PC-3 (cell line): ENCODE measurements at regions of chr11 and their contacts with region 1.

Region 1: GRCh38 chr11:129853518-129854236 is 38.0 kb downstream of the TMEM45B start:
- DNase-seq: peak; percentile 99
- ATAC-seq: peak; percentile 78
- H3K4me3 ChIP-seq: peak overlapping the region; percentile 3; the same call in 1 of the 2 replicates
- H3K27ac ChIP-seq: peak overlapping the region; percentile 95
- H3K4me1 ChIP-seq: peaks cover 49% of the 10 kb centered on the region
- H3K27me3 ChIP-seq: no peaks in the 10 kb centered on the region
- CTCF ChIP-seq: no peak

Region 2: DNA sequence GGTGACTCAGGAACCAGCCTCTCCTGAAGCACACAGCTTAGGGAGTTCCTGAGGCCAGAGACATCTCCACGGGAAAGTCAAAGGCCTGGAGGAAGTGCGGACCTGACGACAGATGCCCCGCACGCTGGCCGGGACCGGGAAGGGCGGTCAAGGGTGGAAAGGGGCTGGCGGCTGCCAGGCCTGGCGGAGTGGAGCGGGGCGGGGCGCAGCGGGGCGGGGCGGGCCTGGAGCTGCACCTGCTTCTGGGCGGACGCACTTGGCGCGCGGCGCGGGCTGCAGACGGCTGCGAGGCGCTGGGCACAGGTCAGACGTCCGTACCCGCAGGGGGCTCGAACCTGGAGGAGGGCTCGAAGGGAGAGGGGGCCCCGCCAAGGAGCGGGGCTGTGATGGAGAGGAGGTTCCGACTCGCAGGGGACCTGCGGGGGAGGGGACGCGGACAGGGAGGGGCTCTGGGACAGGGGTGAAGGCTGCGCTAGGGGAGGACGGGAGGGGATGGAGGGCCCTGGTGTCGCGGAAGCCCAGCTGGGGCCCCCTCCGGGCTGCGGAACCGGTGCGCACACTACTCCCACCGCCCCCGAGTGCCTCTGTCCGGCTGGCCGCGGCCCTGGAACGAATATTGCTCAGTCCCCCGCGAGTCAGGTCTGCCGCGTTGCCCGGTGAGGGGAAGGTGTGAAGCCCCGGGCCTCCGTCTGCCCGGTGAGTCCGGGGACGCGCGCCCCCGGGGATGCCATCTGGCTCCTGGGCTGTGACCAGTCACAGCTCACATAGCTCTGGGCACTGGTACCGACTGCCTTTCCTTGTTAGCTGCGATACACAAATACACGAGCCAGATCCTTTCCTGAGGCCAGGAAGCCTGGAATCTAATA is 37.8 kb before region 1 on chr11 and contains the start of gene TMEM45B:
- CTCF ChIA-PET with region 1: no interaction called
- POLR2A ChIA-PET with region 1: no interaction called
- intact Hi-C with region 1: loop called (anchors 5 kb)
- DNase-seq: peak; percentile 66
- ATAC-seq: peak; percentile 80
- H3K4me3 ChIP-seq: peak within 1 kb of the TSS; percentile 89
- H3K27ac ChIP-seq: peak within 1 kb of the TSS; percentile 58
- H3K4me1 ChIP-seq: peaks cover 35% of the 10 kb centered on the region
- H3K27me3 ChIP-seq: no peaks in the 10 kb centered on the region
- CTCF ChIP-seq: no peak
- total RNA-seq, gene TMEM45B: 24.0 and 30.4 TPM in 2 replicates

Region 3: GRCh38 chr11:129865701-129866100 is 12.0 kb after region 1 on chr11:
- CTCF ChIA-PET with region 1: no interaction called
- POLR2A ChIA-PET with region 1: no interaction called
- intact Hi-C with region 1: no loop called
- DNase-seq: no peak
- ATAC-seq: no peak
- H3K4me3 ChIP-seq: no peak overlapping the region
- H3K27ac ChIP-seq: no peak overlapping the region
- H3K4me1 ChIP-seq: peaks cover 23% of the 10 kb centered on the region
- H3K27me3 ChIP-seq: no peaks in the 10 kb centered on the region
- CTCF ChIP-seq: no peak

Region 4: GRCh38 chr11:129905402-129905801 is 51.7 kb after region 1 on chr11:
- CTCF ChIA-PET with region 1: no interaction called
- POLR2A ChIA-PET with region 1: no interaction called
- intact Hi-C with region 1: no loop called
- DNase-seq: no peak
- ATAC-seq: no peak
- H3K4me3 ChIP-seq: no peak overlapping the region
- H3K27ac ChIP-seq: no peak overlapping the region
- H3K4me1 ChIP-seq: no peaks in the 10 kb centered on the region
- H3K27me3 ChIP-seq: no peaks in the 10 kb centered on the region
- CTCF ChIP-seq: no peak